ENCODE measurements at regions of chr4 and their contacts with region 1.

Region 1: DNA sequence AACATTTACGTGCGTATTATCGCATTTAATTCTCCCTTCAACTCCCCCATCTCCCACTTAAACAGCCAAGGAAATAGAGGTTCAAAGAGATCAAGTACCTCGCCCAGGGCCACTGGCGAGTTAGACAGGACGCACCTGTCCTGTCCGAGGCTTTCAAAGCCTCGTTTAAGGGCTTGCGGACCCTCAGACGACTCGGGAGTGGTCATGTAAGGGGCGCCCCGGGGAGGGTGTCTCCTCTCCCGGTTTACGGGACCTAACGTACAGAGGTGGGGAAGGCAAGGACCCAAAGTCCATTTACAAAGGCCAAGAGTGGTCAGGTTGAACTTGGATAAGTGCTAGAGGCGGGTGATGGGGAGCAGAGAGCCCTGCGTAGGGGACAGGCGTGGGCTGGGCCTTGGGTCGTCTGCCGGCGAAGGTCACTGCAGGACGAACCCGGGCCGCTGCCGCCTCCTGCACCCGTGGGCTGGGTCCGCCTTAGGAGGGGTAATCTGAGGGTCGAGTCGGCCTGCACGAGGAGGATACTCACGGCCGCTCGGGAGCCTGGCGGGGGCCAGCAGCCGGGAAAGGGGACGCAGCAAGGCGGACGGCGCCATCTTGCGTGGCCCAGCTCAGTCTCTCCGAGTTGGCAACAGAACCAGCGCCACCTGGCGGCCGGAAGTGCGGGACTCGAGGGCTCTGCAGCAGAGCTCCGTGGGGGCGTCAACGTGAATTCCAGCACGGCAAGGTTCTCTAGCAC is 5.9 kb upstream of the NAA15 start:
- DNase-seq: peak; percentile 98
- H3K4me3 ChIP-seq: peak overlapping the region; percentile 68 to 79 (median 76)
- H3K27ac ChIP-seq: peak overlapping the region; percentile 78 to 87 (median 83)
- H3K4me1 ChIP-seq: peaks cover 0 to 34% (median 27%) of the 10 kb centered on the region in 4 donors
- H3K27me3 ChIP-seq: no peaks in the 10 kb centered on the region
- CTCF ChIP-seq: peak; percentile 83 to 92 (median 86)
- EP300 ChIP-seq: no peak
- POLR2A ChIP-seq: no peak

Region 2: DNA sequence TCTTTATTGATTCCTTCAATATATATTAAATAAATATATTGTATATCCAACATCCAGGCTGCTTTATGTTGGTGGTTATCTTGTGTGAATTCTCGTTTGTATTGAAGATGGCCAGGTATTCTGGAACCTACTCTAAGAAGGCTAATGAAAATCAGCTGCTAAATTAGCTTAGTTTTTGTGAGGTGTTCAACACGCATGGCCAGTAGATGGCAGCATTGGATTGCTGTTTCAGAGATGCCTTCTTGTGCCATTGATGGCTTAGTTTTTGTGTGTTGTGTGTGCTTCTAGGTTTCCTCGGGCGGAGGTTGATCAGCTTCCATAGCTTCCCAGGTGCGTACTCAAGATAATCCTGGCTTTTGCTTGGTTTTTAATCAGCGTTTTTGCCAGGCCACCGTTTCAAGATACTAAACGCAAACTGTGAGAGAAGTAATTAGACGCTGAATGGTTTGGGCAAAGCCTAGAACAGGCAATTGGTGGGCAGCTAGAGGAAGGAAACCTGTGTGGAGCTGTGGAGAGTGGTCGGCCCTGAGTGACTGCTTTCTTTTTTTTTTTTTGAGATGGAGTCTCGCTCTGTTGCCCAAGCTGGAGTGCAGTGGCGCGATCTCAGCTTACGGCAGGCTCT is 264.6 kb before region 1 on chr4:
- intact Hi-C with region 1: loop called (anchors 2 kb)
- DNase-seq: peak; percentile 79
- H3K4me3 ChIP-seq: no peak overlapping the region
- H3K27ac ChIP-seq: peak overlapping the region in 1 of 4 donors; percentile 9
- H3K4me1 ChIP-seq: peaks cover 0 to 15% (median 10%) of the 10 kb centered on the region in 4 donors
- H3K27me3 ChIP-seq: no peaks in the 10 kb centered on the region
- CTCF ChIP-seq: peak; percentile 64 to 80 (median 75)
- EP300 ChIP-seq: no peak
- POLR2A ChIP-seq: no peak

Region 3: GRCh38 chr4:139099366-139099982 is 195.9 kb before region 1 on chr4:
- intact Hi-C with region 1: loop called (anchors 5 kb)
- DNase-seq: peak; percentile 82
- H3K4me3 ChIP-seq: no peak overlapping the region
- H3K27ac ChIP-seq: no peak overlapping the region
- H3K4me1 ChIP-seq: peaks cover 0 to 7% (median 0%) of the 10 kb centered on the region in 4 donors
- H3K27me3 ChIP-seq: no peaks in the 10 kb centered on the region
- CTCF ChIP-seq: peak; percentile 56 to 88 (median 74)
- EP300 ChIP-seq: no peak
- POLR2A ChIP-seq: no peak

Region 4: GRCh38 chr4:139229534-139230039 is 65.8 kb before region 1 on chr4:
- intact Hi-C with region 1: loop called (anchors 1 kb)
- DNase-seq: no peak
- H3K4me3 ChIP-seq: no peak overlapping the region
- H3K27ac ChIP-seq: no peak overlapping the region
- H3K4me1 ChIP-seq: no peaks in the 10 kb centered on the region
- H3K27me3 ChIP-seq: no peaks in the 10 kb centered on the region
- CTCF ChIP-seq: peak; percentile 47 to 77 (median 67)
- EP300 ChIP-seq: no peak
- POLR2A ChIP-seq: no peak

Region 5: GRCh38 chr4:140237606-140237986 is 942.2 kb after region 1 on chr4:
- intact Hi-C with region 1: no loop called
- DNase-seq: peak; percentile 92
- H3K4me3 ChIP-seq: peak overlapping the region in 3 of 4 donors; percentile 10 to 31 (median 29)
- H3K27ac ChIP-seq: peak overlapping the region; percentile 82 to 91 (median 87)
- H3K4me1 ChIP-seq: peaks cover 0 to 56% (median 42%) of the 10 kb centered on the region in 4 donors
- H3K27me3 ChIP-seq: no peaks in the 10 kb centered on the region
- CTCF ChIP-seq: no peak
- EP300 ChIP-seq: no peak
- POLR2A ChIP-seq: peak; percentile 32 to 49